ENCODE measurements at regions of chr3 and their contacts with region 1.

Region 1: DNA sequence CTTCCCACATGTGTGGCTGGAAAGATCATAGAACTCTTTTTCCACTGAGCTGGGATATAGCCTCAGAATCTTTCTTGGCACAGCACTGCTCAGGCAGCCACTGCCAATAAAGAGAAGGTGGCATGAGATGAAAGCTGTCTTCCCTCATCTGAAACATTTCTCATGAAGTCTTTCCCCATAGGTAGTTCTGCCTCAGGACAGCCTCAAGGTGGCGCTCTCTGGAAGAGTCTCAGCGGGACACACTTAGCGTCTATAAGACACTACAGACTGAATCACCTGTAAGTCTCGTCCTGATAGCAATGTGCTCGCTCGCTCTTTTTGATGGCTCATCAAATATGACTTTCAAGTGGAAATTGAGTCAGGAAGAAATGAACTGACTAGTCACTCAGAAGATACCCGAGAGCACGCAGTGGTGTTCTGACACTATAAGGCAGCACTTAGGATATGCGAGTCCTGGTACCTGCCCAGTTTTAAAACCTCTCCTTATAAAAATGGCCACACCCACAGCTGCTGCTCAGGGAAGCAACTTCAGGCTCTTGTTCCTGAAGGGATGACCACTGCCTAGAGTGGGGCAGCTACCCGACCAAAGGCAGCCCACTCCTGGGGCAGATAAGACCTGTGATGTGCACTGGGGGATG is 269.5 kb downstream of the SUCLG2 start:
- DNase-seq: peak in 2 of 3 donors; percentile 10 to 28
- ATAC-seq: peak; percentile 50
- H3K4me3 ChIP-seq: no peak overlapping the region
- H3K4me1 ChIP-seq: no peaks in the 10 kb centered on the region
- CTCF ChIP-seq: peak; percentile 11

Region 2: GRCh38 chr3:67788396-67788795 is 403.5 kb after region 1 on chr3:
- intact Hi-C with region 1: loop called in 1 of 2 experiments (anchors 5 kb)
- DNase-seq: no peak
- ATAC-seq: no peak
- H3K4me3 ChIP-seq: no peak overlapping the region
- H3K4me1 ChIP-seq: no peaks in the 10 kb centered on the region
- CTCF ChIP-seq: no peak

Measured in mucosa of descending colon (tissue), 3 donors.